PC-3 (cell line): ENCODE measurements at regions of chr22 and their contacts with region 1.

Region 1: GRCh38 chr22:35840302-35840739 is 122.6 kb downstream of the APOL5 start:
- DNase-seq: peak; percentile 91
- ATAC-seq: peak; percentile 75
- H3K4me3 ChIP-seq: peak overlapping the region; percentile 83
- H3K27ac ChIP-seq: peak overlapping the region; percentile 49
- H3K4me1 ChIP-seq: peaks cover 27% of the 10 kb centered on the region; the same call in 1 of the 2 replicates
- H3K27me3 ChIP-seq: no peaks in the 10 kb centered on the region
- CTCF ChIP-seq: no peak

Region 2: DNA sequence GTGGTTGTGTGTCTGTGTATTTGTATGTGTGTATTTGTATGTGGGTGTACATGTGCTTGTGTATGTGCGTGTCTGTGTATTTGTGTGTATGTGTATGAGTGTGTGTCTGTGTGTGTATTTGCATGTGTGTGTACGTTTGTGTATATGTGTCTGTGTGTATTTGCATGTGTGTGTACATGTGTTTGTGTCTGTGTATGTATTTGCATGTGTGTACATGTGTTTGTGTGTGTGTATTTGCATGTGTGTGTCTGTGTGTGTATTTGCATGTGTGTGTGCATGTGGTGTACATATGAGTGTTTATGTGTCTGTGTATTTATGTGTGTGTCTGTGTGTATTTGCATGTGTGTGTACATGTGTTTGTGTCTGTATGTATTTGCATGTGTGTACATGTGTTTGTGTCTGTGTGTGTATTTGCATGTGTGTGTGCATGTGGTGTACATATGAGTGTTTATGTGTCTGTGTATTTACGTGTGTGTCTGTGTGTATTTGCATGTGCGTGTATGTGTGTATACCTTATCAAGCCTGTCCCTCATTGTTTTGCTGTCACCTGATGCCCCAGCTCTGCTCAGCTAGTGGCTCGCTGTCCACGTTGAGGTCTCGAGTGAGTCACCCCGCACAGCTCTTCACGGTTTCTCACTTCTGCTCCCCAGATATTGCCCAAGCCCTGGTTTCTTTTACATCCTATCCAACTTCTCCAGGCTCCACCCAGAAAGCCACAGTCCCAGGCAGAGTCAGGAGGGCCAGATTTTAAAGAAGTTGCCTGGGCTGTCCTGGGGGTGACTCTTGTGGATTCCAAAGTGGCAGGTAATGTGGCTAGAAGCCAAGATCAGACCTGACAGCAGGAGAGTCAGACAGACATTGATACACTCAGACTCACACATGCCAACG is 238.3 kb before region 1 on chr22:
- CTCF ChIA-PET with region 1: no interaction called
- POLR2A ChIA-PET with region 1: no interaction called
- intact Hi-C with region 1: no loop called
- DNase-seq: peak; percentile 88
- ATAC-seq: peak; percentile 73
- H3K4me3 ChIP-seq: no peak overlapping the region
- H3K27ac ChIP-seq: peak overlapping the region; percentile 47
- H3K4me1 ChIP-seq: peaks cover 47% of the 10 kb centered on the region
- H3K27me3 ChIP-seq: no peaks in the 10 kb centered on the region
- CTCF ChIP-seq: no peak

Region 3: GRCh38 chr22:35761037-35761436 is 79.3 kb before region 1 on chr22:
- CTCF ChIA-PET with region 1: no interaction called
- POLR2A ChIA-PET with region 1: no interaction called
- intact Hi-C with region 1: loop called (anchors 5 kb)
- DNase-seq: peak; percentile 9
- ATAC-seq: no peak
- H3K4me3 ChIP-seq: no peak overlapping the region
- H3K27ac ChIP-seq: no peak overlapping the region
- H3K4me1 ChIP-seq: no peaks in the 10 kb centered on the region
- H3K27me3 ChIP-seq: no peaks in the 10 kb centered on the region
- CTCF ChIP-seq: peak; percentile 45

Region 4: DNA sequence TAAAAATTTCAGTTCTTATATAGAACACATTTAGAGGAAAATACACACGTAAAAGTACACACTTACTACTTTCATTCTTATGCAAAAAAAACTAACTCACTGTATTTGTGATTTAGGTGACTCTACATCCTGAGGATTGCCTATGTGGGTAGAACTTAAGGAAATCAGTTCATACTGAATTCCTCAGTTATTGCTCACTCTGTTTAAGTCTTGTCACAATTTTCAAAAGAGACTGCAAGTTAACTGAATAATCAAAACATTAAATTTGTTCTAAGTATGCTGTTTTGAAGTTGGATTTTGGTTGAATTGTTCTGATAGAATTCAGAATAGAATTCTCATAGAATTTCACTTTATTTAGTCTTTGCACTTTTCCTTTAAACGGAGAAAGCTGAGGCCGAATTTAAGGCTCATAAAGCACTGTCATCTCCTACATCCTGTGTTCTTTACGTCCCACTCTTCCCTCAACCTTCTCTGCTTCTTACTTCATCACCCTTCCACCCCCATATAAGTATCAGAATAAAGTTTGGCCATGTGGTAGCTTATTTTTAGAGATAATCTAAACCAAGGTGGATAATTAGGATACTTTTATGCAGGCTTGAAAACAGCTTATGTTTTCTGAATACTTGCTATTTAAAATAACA is 62.9 kb before region 1 on chr22:
- CTCF ChIA-PET with region 1: interaction called, 6 read pairs
- POLR2A ChIA-PET with region 1: no interaction called
- intact Hi-C with region 1: loop called (anchors 2 kb)
- DNase-seq: peak; percentile 71
- ATAC-seq: peak; percentile 94
- H3K4me3 ChIP-seq: peak overlapping the region; percentile 31; the same call in 1 of the 2 replicates
- H3K27ac ChIP-seq: peak overlapping the region; percentile 70
- H3K4me1 ChIP-seq: peaks cover 25% of the 10 kb centered on the region
- H3K27me3 ChIP-seq: no peaks in the 10 kb centered on the region
- CTCF ChIP-seq: no peak

Region 5: DNA sequence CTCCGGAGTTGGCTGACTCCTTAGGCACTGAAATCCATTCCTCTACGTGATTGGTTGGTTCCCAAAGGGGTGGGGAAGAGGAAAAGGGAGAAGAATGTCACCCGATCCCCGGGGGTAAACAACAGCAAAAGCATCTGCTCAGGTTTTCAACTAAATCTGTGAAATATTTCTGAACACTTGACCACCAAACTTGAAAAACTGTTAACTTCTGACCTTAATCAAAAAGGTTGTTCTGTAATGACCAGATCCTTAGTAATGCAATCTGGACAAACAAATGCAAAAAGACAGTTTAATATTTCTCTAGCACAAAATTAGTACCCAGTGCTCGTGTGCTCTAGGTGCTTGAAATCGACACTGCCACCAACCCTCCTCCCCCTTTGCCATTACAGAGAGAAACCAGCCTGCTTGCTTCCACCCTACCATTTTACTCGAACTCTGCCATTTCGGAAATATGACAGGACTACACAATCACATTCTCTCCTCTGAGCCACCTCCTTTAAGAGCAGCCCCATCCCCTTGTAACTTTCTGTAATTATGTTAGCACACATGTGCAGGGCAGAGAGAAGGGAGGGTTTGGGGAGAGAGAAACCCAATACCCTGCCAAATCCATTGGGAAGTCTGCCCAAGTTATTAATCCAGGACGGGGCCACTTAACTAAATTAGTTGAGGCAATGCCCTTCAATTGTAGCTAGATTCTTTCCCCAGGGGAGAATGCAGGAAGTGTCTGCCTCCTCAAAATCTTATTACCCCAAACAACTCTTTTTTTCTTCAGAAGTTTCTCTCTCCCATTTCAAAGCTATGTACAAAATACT is 74.5 kb after region 1 on chr22:
- CTCF ChIA-PET with region 1: no interaction called
- POLR2A ChIA-PET with region 1: interaction called, 3 read pairs
- intact Hi-C with region 1: loop called (anchors 2 kb)
- DNase-seq: peak; percentile 89
- ATAC-seq: peak; percentile 87
- H3K4me3 ChIP-seq: peak overlapping the region; percentile 67
- H3K27ac ChIP-seq: peak overlapping the region; percentile 64
- H3K4me1 ChIP-seq: peaks cover 31% of the 10 kb centered on the region
- H3K27me3 ChIP-seq: no peaks in the 10 kb centered on the region
- CTCF ChIP-seq: no peak

Region 6: GRCh38 chr22:35921777-35922176 is 81.5 kb after region 1 on chr22:
- CTCF ChIA-PET with region 1: interaction called, 4 read pairs
- POLR2A ChIA-PET with region 1: interaction called, 4 read pairs
- intact Hi-C with region 1: loop called (anchors 2 kb)
- DNase-seq: peak; percentile 84
- ATAC-seq: peak; percentile 98
- H3K4me3 ChIP-seq: no peak overlapping the region
- H3K27ac ChIP-seq: peak overlapping the region; percentile 11; the same call in 1 of the 2 replicates
- H3K4me1 ChIP-seq: peaks cover 13% of the 10 kb centered on the region
- H3K27me3 ChIP-seq: no peaks in the 10 kb centered on the region
- CTCF ChIP-seq: peak; percentile 71

Region 7: DNA sequence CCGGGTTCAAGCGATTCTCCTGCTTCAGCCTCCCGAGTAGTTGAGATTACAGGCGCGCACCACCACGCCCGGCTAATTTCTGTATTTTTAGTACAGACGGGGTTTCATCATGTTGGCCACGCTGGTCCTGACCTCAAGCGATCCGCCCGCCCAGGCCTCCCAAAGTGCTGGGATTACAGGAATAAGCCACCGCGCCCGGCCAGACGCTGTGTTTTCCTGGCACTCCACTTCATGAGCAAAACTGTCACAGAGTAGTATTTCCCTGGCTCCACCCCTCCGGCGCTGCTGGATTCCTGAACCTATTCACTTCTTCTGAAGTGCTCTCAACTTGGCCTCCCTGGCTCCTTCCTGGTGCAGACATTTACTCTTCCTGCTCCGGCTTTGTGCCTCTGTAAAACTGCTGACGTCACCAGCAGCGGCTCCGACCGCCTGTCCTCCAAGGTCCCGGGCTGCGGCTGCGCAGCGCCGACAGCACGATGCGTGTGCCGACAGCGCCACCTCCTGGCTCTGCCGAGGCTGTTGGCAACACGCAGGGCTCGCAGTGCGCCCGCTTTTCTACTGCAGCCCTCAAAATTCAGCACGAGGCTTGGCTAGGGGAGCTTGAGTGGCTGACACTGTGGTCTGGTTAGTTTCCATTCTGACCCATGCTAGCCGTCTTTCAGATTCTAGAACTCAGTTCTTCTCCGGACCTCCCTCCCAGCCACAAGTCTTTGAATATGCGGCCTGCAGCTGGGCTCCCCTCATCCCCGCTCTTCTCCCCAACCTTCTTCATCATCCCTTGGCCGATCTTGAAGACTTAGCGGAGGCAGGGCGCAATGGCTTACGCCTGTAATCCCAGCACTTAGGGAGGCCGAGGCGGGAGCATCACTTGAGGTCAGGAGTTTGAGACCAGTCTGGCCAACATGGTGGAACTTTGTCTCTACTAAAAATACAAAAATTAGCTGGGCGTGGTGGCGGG is 283.6 kb after region 1 on chr22:
- CTCF ChIA-PET with region 1: no interaction called
- POLR2A ChIA-PET with region 1: no interaction called
- intact Hi-C with region 1: loop called (anchors 10 kb)
- DNase-seq: peak; percentile 92
- ATAC-seq: peak; percentile 97
- H3K4me3 ChIP-seq: peak overlapping the region; percentile 43; the same call in 1 of the 2 replicates
- H3K27ac ChIP-seq: 0 out of 2 replicates have a peak overlapping the region, but pooled peaks have one; percentile 32
- H3K4me1 ChIP-seq: peaks cover 4% of the 10 kb centered on the region; the same call in 1 of the 2 replicates
- H3K27me3 ChIP-seq: no peaks in the 10 kb centered on the region
- CTCF ChIP-seq: peak; percentile 91